A549 (cell line): ENCODE measurements at regions of chr2 and their contacts with region 1.

Region 1: GRCh38 chr2:170950221-170950761 is 21.2 kb downstream of the GORASP2 start:
- DNase-seq: no peak
- ATAC-seq: no peak
- H3K4me3 ChIP-seq: no peak overlapping the region
- H3K27ac ChIP-seq: no peak overlapping the region
- H3K4me1 ChIP-seq: no peaks in the 10 kb centered on the region
- CTCF ChIP-seq: no peak
- EP300 ChIP-seq: no peak
- POLR2A ChIP-seq: no peak
- RAD21 ChIP-seq: no peak

Region 2: GRCh38 chr2:170878505-170878904 is 71.8 kb before region 1 on chr2:
- CTCF ChIA-PET with region 1: no interaction called
- POLR2A ChIA-PET with region 1: no interaction called
- DNase-seq: no peak
- ATAC-seq: no peak
- H3K4me3 ChIP-seq: no peak overlapping the region
- H3K27ac ChIP-seq: no peak overlapping the region
- H3K4me1 ChIP-seq: no peaks in the 10 kb centered on the region
- CTCF ChIP-seq: no peak
- EP300 ChIP-seq: no peak
- POLR2A ChIP-seq: no peak
- RAD21 ChIP-seq: no peak

Region 3: GRCh38 chr2:170922634-170923494 is 27.4 kb before region 1 on chr2:
- CTCF ChIA-PET with region 1: no interaction called
- POLR2A ChIA-PET with region 1: no interaction called
- DNase-seq: no peak
- ATAC-seq: no peak
- H3K4me3 ChIP-seq: no peak overlapping the region
- H3K27ac ChIP-seq: no peak overlapping the region
- H3K4me1 ChIP-seq: 0 out of 3 replicates have a peak, but pooled peaks cover under 1% of the 10 kb centered on the region
- CTCF ChIP-seq: no peak
- EP300 ChIP-seq: no peak
- POLR2A ChIP-seq: no peak
- RAD21 ChIP-seq: no peak

Region 4: GRCh38 chr2:170966648-170967436 is 16.6 kb after region 1 on chr2:
- CTCF ChIA-PET with region 1: interaction called, 13 read pairs
- POLR2A ChIA-PET with region 1: interaction called, 6 read pairs
- DNase-seq: peak; percentile 49 to 61
- ATAC-seq: peak; percentile 94 to 95
- H3K4me3 ChIP-seq: no peak overlapping the region
- H3K27ac ChIP-seq: no peak overlapping the region
- H3K4me1 ChIP-seq: no peaks in the 10 kb centered on the region
- CTCF ChIP-seq: peak; percentile 40; the same call in 2 of the 3 replicates
- EP300 ChIP-seq: no peak
- POLR2A ChIP-seq: no peak
- RAD21 ChIP-seq: peak in 1 of 2 experiments; percentile 24; a peak in 1 of 5 replicates